Sigmoid colon (tissue), 7 donors: ENCODE measurements at regions of chr4 and their contacts with region 1.

Region 1: DNA sequence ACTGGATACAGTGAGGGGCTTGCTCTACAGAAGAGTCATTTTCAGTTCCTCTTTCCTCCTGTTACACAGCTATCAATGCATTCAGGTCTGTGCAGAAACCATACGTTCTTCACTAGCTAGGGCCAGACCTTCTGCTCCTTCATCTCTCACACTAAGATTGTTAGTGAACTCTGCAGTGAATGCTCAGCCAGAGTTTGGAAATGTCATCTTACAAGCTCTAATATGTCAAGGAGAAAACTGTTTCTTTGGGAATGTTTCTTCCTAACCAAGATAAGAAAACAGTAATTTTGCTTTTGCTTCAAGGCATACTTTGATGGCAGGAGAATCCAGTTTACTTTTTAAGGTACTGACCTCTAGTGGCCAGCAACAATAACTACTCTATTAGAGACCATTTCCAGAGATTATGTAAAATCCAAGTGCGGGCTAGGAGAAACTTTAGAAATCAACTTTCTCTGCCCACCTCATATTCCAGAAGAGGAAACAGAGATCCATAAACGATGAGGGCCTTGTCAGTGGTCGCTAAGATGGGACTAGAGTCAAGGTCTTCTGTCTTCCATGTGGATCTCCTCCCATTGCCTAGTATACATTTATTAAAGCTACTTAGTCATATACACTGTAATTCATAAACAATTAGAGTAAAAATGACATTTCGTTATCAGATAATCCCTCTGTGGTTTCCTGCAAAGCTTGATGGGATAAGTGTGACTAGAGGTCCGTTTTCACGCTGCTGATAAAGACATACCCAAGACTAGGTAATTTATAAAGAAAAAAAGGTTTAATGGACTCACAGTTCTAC is 12.1 kb upstream of the CC2D2A start:
- DNase-seq: no peak
- H3K4me3 ChIP-seq: no peak overlapping the region
- H3K27ac ChIP-seq: peak overlapping the region; percentile 29 to 61 (median 42)
- H3K4me1 ChIP-seq: peaks cover 0 to 21% (median 9%) of the 10 kb centered on the region in 4 donors
- H3K27me3 ChIP-seq: no peaks in the 10 kb centered on the region
- CTCF ChIP-seq: peak; percentile 52 to 76 (median 64)
- EP300 ChIP-seq: no peak
- POLR2A ChIP-seq: no peak

Region 2: DNA sequence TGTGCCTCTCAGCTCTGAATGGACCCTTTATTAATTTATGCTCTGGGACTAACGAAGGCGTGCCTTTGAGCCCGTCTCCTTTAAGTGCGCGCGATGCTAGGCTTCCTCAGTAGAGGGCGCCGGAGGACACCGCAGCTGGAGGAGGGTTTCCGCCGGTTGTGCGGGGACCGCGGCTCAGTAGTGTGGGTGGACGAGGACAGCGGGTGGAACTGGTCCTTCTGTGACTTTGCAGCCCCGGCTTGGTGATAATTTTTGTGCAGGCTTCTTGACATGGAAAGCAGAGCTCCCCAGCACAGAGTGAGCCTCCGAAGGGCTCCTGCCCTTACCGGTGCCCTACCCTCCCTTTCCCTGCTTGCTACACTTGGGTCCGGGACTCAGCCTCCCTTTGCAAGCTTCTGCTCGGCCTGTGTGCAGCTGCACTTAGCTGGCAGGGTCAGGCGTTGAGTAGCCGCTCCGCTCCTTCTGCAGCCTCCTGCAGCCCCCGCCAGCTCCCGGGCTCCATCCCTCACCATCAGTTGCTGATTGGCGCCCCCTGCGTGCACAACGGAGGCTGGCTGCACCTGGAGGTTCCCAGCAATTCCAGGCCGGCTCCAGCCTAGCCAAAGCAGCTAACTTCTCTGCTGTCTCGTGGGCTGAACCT is 1803.3 kb before region 1 on chr4:
- intact Hi-C with region 1: loop called (anchors 10 kb)
- DNase-seq: peak; percentile 86
- H3K4me3 ChIP-seq: peak overlapping the region; percentile 26 to 53 (median 44)
- H3K27ac ChIP-seq: peak overlapping the region in 2 of 4 donors; percentile 38 to 40
- H3K4me1 ChIP-seq: peaks cover 0 to 15% (median 3%) of the 10 kb centered on the region in 4 donors
- H3K27me3 ChIP-seq: no peaks in the 10 kb centered on the region
- CTCF ChIP-seq: peak; percentile 45 to 85 (median 58)
- EP300 ChIP-seq: no peak
- POLR2A ChIP-seq: no peak

Region 3: GRCh38 chr4:15162465-15163283 is 294.9 kb before region 1 on chr4:
- intact Hi-C with region 1: no loop called
- DNase-seq: no peak
- H3K4me3 ChIP-seq: no peak overlapping the region
- H3K27ac ChIP-seq: no peak overlapping the region
- H3K4me1 ChIP-seq: no peaks in the 10 kb centered on the region
- H3K27me3 ChIP-seq: no peaks in the 10 kb centered on the region
- CTCF ChIP-seq: peak in 2 of 4 experiments; percentile 18 to 46
- EP300 ChIP-seq: no peak
- POLR2A ChIP-seq: no peak

Region 4: GRCh38 chr4:15231265-15232091 is 226.1 kb before region 1 on chr4:
- intact Hi-C with region 1: loop called (anchors 1 kb)
- DNase-seq: peak; percentile 91
- H3K4me3 ChIP-seq: no peak overlapping the region
- H3K27ac ChIP-seq: peak overlapping the region in 1 of 4 donors; percentile 51
- H3K4me1 ChIP-seq: peaks cover 0 to 45% (median 31%) of the 10 kb centered on the region in 4 donors
- H3K27me3 ChIP-seq: no peaks in the 10 kb centered on the region
- CTCF ChIP-seq: peak; percentile 72 to 77 (median 73)
- EP300 ChIP-seq: no peak
- POLR2A ChIP-seq: no peak

Region 5: GRCh38 chr4:15238720-15239119 is 218.9 kb before region 1 on chr4:
- intact Hi-C with region 1: loop called (anchors 2 kb)
- DNase-seq: no peak
- H3K4me3 ChIP-seq: no peak overlapping the region
- H3K27ac ChIP-seq: peak overlapping the region in 1 of 4 donors; percentile 48
- H3K4me1 ChIP-seq: peaks cover 0 to 46% (median 20%) of the 10 kb centered on the region in 4 donors
- H3K27me3 ChIP-seq: no peaks in the 10 kb centered on the region
- CTCF ChIP-seq: peak; percentile 14 to 56 (median 40)
- EP300 ChIP-seq: no peak
- POLR2A ChIP-seq: no peak